Activated B cell treated with CpG ODN at 0.5 μM for 24 hours (primary cell): ENCODE measurements at regions of chr18 and their contacts with region 1.

Region 1: DNA sequence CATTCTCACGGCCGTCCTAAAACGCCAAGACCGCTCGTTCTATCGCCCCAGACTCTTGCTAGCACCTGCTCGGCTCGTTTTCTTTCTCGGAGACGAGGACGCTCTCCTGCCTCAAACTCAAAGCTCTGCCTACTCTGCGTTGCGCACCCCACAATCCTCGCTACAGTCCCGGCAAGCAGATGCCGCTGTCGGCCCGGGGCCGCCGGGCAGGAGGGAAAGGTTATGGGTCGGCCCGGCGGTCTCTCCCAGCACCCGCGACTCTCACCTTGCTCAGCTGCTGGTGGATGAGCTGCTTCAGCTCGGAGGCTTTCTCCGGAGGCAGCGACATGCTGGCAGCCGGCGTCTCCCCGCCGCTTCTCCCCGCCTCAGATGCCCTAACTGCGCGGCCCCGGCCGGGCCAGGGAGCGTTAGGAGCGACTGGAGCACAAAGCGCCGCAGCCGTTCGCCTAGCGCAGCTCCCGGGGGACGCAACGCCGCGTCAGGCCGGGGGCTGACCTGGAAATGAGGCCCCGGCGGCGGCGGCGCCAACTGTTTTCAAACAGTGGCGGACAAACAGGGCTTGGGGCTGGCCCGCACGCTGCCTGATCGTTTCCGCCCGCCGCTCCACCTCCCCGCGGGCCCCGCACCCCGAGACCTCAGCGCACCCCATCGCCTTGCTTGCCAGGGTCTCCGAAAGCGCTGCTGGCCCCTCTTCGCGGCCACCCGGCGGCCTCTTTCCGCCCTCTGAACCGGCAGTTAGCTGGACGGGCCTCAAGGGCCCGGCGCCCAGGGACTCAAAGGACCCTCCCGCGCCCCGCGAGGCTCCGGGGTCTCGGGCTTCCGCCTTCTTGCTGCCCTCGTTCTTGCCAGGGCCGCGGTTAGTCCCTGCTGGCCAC is at the starts of genes CEP76 and PSMG2:
- DNase-seq: peak; percentile 90
- ATAC-seq: peak; percentile 88
- H3K4me3 Mint-ChIP-seq: peak within 1 kb of the TSS; percentile 99
- H3K27ac Mint-ChIP-seq: peak within 1 kb of the TSS; percentile 99
- H3K4me1 Mint-ChIP-seq: peaks cover 38% of the 10 kb centered on the region
- H3K27me3 Mint-ChIP-seq: no peaks in the 10 kb centered on the region
- CTCF ChIP-seq: no peak
- total RNA-seq, gene CEP76: 6.4 and 6.9 TPM in 2 replicates
- total RNA-seq, gene PSMG2: 67.4 and 69.1 TPM in 2 replicates

Region 2: DNA sequence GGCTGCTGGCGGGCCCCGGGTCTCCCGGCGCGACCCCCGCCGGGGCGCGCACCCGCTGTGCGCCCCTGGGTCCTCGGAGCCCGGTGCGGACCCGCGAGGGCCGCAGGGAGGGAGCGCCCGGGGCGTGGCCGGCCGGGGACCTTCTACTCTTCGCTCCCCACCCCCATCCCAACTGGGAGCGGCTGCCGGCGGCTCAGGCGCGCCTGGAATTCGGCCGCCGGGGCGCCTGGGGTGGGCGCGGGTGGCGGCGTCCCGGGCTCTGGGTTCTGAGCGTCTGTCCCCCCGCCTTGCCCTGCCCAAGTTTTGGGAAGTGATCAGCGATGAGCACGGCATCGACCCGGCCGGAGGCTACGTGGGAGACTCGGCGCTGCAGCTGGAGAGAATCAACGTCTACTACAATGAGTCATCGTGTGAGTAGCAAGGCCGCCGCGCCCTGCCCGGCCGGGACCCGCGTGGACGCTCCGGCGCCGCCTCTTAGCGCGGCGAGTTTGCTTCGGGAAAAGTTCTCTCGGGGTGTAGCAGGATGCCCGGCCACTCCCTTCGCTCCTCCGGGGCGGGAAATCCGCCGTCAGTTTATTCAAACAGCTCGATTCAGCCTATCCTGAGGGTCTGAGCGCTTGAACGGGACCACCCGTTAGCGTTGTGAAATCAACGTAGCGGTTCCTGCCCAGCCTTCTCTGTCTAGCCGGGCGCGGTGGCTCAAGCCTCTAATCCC is 393.9 kb before region 1 on chr18:
- CTCF ChIA-PET with region 1: no interaction called
- POLR2A ChIA-PET with region 1: interaction called, 5 read pairs
- intact Hi-C with region 1: loop called (anchors 1 kb)
- DNase-seq: peak; percentile 57
- ATAC-seq: peak; percentile 63
- H3K4me3 Mint-ChIP-seq: peak overlapping the region; percentile 85
- H3K27ac Mint-ChIP-seq: peak overlapping the region; percentile 69
- H3K4me1 Mint-ChIP-seq: peaks cover 32% of the 10 kb centered on the region
- H3K27me3 Mint-ChIP-seq: peaks cover 20% of the 10 kb centered on the region
- CTCF ChIP-seq: no peak

Region 3: DNA sequence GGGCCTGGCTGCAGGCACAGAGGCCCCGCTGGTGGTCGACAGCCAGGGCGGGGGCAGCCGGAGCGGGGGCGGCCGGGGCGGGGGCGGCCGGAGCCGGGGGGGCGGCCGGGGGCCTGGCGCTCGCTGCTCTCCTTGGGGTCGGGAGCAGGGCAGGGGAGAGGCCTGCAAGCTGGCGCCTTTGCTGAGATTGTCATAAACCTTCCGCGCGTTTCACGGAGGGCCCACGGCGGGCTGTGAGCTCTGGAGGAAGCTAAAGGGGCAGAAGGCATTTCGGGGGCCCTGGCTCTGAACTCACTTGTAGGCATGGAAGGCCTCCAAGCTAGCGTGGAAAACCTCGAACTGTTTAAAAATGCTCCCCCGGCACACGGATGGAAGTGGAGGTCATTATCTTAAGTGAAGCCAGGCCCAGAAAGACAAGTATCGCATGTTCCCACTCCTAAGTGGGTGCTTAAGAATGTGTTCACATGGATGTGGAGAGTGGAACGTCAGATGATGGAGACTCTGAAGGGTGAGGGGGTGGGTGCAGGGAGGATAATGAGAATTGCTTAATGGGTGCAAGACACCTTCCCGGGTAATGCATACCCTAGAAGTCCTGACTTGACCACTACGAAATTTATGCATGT is 294.1 kb before region 1 on chr18:
- CTCF ChIA-PET with region 1: no interaction called
- POLR2A ChIA-PET with region 1: interaction called, 5 read pairs
- intact Hi-C with region 1: loop called (anchors 5 kb)
- DNase-seq: no peak
- ATAC-seq: peak; percentile 8
- H3K4me3 Mint-ChIP-seq: peak overlapping the region; percentile 76
- H3K27ac Mint-ChIP-seq: peak overlapping the region; percentile 68
- H3K4me1 Mint-ChIP-seq: peaks cover 18% of the 10 kb centered on the region
- H3K27me3 Mint-ChIP-seq: peaks cover 7% of the 10 kb centered on the region
- CTCF ChIP-seq: no peak

Region 4: DNA sequence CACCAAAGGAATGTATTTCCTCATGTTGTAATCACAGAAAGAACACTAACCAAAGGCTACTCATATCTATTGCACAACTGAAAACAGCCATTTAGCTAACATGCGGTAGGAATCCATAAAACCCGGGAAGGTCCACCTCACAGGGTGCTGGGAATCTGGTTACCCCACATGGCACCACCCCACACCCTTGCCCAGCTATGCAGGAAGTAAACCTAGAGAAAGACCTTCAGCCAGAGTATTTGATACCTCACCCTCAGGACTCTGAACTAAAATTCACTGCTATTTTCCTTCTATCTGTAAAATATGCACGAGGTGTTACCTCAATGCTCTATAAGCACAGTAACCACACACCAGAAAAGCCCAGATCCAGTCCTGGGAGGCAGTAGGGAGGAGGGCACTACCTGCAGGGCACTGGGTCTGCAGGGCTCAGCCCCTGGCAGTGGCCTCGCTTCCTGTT is 135.7 kb after region 1 on chr18:
- CTCF ChIA-PET with region 1: no interaction called
- POLR2A ChIA-PET with region 1: no interaction called
- intact Hi-C with region 1: loop called (anchors 1 kb)
- DNase-seq: no peak
- ATAC-seq: no peak
- H3K4me3 Mint-ChIP-seq: peak overlapping the region; percentile 52
- H3K27ac Mint-ChIP-seq: peak overlapping the region; percentile 84
- H3K4me1 Mint-ChIP-seq: peaks cover 44% of the 10 kb centered on the region
- H3K27me3 Mint-ChIP-seq: no peaks in the 10 kb centered on the region
- CTCF ChIP-seq: no peak

Region 5: GRCh38 chr18:13137670-13138419 is 435.4 kb after region 1 on chr18:
- CTCF ChIA-PET with region 1: no interaction called
- POLR2A ChIA-PET with region 1: interaction called, 5 read pairs
- intact Hi-C with region 1: loop called (anchors 1 kb)
- DNase-seq: peak; percentile 43
- ATAC-seq: peak; percentile 87
- H3K4me3 Mint-ChIP-seq: peak overlapping the region; percentile 98
- H3K27ac Mint-ChIP-seq: peak overlapping the region; percentile 97
- H3K4me1 Mint-ChIP-seq: peaks cover 23% of the 10 kb centered on the region
- H3K27me3 Mint-ChIP-seq: no peaks in the 10 kb centered on the region
- CTCF ChIP-seq: no peak